Panc1 (cell line): ENCODE measurements at regions of chr5 and their contacts with region 1.

Region 1: GRCh38 chr5:175696139-175696854 is 38.4 kb downstream of the HRH2 start:
- DNase-seq: no peak
- ATAC-seq: peak; percentile 46; the same call in 1 of the 2 replicates
- H3K4me3 ChIP-seq: no peak overlapping the region
- H3K27ac ChIP-seq: no peak overlapping the region
- H3K4me1 ChIP-seq: no peaks in the 10 kb centered on the region
- H3K27me3 ChIP-seq: no peaks in the 10 kb centered on the region; the same call in none of the 2 replicates
- CTCF ChIP-seq: peak; percentile 85; the same call in 1 of the 2 replicates

Region 2: DNA sequence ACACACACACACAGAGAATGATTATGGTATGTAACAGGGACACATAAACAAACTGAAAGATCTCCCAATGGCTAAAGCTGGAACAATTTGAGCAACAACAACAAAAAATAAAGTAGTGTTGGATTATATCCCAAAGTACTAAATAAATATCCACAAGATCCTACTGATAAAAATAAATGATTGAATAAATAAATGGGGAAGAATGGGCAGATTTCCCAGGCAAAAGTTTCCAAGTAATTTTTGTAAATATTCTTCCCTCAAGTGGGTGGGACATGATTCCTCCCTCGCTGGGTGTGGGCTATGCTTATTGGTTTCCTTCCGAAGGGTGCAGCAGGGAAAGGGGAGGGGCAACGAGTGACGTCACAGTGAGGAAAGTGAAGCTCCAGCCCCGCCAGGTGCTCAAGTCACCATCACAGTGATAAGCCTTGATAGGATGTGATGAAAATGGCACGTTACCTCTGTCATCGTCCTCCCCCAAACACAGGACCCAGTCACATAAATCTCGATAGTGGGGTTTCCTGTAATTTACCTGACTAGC is 547.6 kb before region 1 on chr5:
- CTCF ChIA-PET with region 1: no interaction called
- POLR2A ChIA-PET with region 1: no interaction called
- in situ Hi-C with region 1: no loop called
- intact Hi-C with region 1: no loop called
- DNase-seq: no peak
- ATAC-seq: no peak
- H3K4me3 ChIP-seq: no peak overlapping the region
- H3K27ac ChIP-seq: no peak overlapping the region
- H3K4me1 ChIP-seq: no peaks in the 10 kb centered on the region
- H3K27me3 ChIP-seq: no peaks in the 10 kb centered on the region
- CTCF ChIP-seq: no peak

Region 3: DNA sequence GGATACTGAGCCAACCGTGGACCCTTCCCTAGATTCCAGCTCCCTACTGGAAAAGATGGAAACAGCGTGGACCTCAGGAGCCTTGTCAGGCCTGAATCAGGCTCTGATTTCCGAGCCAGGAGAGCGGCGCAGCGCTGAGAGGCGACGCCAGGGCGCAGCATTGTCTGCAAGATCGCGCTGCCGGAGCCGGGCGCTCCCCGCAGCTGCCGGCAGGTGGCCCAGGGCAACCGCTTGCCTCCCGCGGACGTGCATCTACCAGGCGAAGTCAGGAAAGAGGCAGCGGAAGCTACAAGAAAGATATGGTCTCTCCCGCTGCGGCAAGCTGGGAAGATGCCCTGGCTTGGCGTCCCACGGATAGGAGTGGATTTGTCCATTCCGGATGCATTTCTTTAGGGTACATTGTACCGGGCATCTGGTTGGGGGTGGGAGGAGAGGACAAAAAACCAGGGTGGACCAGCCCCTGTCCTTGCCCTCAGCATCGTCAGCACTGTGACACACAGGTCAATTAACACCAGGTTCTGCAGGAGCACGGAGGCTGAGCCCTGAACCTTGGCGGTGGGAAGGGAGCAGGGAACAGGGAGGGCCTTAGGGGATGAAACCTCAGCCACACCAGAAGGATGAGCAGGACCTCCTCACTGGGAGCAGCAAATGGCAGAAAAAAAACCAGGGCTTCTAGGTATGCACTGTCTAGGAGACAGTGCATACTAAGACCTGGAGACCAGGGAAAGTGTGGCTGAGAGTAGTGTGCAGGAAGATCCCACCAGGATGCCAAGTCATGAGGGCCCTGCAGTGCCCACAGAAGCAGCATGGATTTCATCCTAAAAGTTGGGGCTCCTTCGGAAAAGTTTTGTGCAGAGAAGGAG is 162.0 kb before region 1 on chr5:
- CTCF ChIA-PET with region 1: interaction called, 6 read pairs
- POLR2A ChIA-PET with region 1: no interaction called
- in situ Hi-C with region 1: no loop called
- intact Hi-C with region 1: loop called (anchors 5 kb)
- DNase-seq: peak; percentile 33
- ATAC-seq: peak; percentile 98
- H3K4me3 ChIP-seq: no peak overlapping the region
- H3K27ac ChIP-seq: no peak overlapping the region
- H3K4me1 ChIP-seq: no peaks in the 10 kb centered on the region
- H3K27me3 ChIP-seq: no peaks in the 10 kb centered on the region
- CTCF ChIP-seq: peak; percentile 99

Region 4: GRCh38 chr5:175547842-175548241 is 148.5 kb before region 1 on chr5:
- CTCF ChIA-PET with region 1: interaction called, 11 read pairs
- POLR2A ChIA-PET with region 1: no interaction called
- in situ Hi-C with region 1: no loop called
- intact Hi-C with region 1: no loop called
- DNase-seq: no peak
- ATAC-seq: no peak
- H3K4me3 ChIP-seq: no peak overlapping the region
- H3K27ac ChIP-seq: no peak overlapping the region
- H3K4me1 ChIP-seq: no peaks in the 10 kb centered on the region
- H3K27me3 ChIP-seq: peaks cover 39% of the 10 kb centered on the region
- CTCF ChIP-seq: no peak

Region 5: DNA sequence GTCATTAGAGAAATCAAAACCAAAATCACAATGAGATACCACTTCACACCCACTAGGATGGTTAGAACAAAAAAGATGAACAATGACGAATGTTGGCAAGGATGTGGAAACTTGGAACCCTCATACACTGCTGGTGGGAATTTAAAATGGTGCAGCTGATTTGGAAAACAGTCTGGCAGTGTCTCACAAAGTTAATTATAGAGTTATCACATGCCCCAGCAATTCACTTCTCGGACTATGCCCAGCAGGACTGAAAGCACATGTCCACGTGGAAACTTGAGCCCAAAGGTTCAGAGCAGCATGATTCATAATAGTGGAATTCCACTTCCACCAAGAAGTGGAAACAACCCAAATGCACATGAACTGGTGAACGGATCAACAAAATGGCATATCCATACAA is 123.4 kb before region 1 on chr5:
- CTCF ChIA-PET with region 1: no interaction called
- POLR2A ChIA-PET with region 1: no interaction called
- in situ Hi-C with region 1: no loop called
- intact Hi-C with region 1: no loop called
- DNase-seq: no peak
- ATAC-seq: no peak
- H3K4me3 ChIP-seq: no peak overlapping the region
- H3K27ac ChIP-seq: no peak overlapping the region
- H3K4me1 ChIP-seq: no peaks in the 10 kb centered on the region
- H3K27me3 ChIP-seq: peaks cover 12% of the 10 kb centered on the region
- CTCF ChIP-seq: no peak

Region 6: GRCh38 chr5:175772747-175773533 is 76.6 kb after region 1 on chr5:
- CTCF ChIA-PET with region 1: no interaction called
- POLR2A ChIA-PET with region 1: no interaction called
- in situ Hi-C with region 1: no loop called
- intact Hi-C with region 1: no loop called
- DNase-seq: no peak
- ATAC-seq: no peak
- H3K4me3 ChIP-seq: no peak overlapping the region
- H3K27ac ChIP-seq: no peak overlapping the region
- H3K4me1 ChIP-seq: no peaks in the 10 kb centered on the region
- H3K27me3 ChIP-seq: no peaks in the 10 kb centered on the region
- CTCF ChIP-seq: no peak

Region 7: DNA sequence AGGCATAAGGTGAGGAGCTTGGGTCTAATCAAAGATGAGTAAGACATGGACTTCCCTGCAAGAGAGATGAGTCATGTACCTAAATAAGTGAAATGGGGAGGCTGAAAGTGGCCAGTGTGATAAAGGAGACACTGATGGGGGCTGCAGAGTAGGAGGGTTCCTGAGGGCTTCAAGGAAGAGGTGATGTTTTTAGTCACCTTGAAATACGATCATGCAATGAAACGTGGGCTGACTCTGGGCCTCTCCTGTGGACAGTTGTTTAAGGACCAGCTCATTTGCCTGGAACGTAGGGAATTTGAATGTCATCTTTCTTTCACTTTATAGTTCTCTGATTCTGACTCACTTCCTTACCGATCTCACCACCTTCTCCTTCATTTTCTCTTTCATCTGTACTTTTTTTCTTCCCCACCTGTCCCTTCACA is 125.5 kb after region 1 on chr5:
- CTCF ChIA-PET with region 1: no interaction called
- POLR2A ChIA-PET with region 1: no interaction called
- in situ Hi-C with region 1: no loop called
- intact Hi-C with region 1: no loop called
- DNase-seq: no peak
- ATAC-seq: no peak
- H3K4me3 ChIP-seq: no peak overlapping the region
- H3K27ac ChIP-seq: no peak overlapping the region; the same call in 1 of the 2 replicates
- H3K4me1 ChIP-seq: no peaks in the 10 kb centered on the region
- H3K27me3 ChIP-seq: no peaks in the 10 kb centered on the region
- CTCF ChIP-seq: no peak